ENCODE measurements at regions of chr16 and their contacts with region 1.

Region 1: GRCh38 chr16:8868416-8869211 is at the start of gene CARHSP1:
- DNase-seq: peak; percentile 83 to 90
- H3K4me3 ChIP-seq: peak within 1 kb of the TSS; percentile 88
- H3K27ac ChIP-seq: peak within 1 kb of the TSS; percentile 55
- H3K4me1 ChIP-seq: peaks cover 41% of the 10 kb centered on the region
- H3K27me3 ChIP-seq: no peaks in the 10 kb centered on the region
- CTCF ChIP-seq: no peak
- total RNA-seq, gene CARHSP1: 179 and 186 TPM in 2 replicates

Region 2: DNA sequence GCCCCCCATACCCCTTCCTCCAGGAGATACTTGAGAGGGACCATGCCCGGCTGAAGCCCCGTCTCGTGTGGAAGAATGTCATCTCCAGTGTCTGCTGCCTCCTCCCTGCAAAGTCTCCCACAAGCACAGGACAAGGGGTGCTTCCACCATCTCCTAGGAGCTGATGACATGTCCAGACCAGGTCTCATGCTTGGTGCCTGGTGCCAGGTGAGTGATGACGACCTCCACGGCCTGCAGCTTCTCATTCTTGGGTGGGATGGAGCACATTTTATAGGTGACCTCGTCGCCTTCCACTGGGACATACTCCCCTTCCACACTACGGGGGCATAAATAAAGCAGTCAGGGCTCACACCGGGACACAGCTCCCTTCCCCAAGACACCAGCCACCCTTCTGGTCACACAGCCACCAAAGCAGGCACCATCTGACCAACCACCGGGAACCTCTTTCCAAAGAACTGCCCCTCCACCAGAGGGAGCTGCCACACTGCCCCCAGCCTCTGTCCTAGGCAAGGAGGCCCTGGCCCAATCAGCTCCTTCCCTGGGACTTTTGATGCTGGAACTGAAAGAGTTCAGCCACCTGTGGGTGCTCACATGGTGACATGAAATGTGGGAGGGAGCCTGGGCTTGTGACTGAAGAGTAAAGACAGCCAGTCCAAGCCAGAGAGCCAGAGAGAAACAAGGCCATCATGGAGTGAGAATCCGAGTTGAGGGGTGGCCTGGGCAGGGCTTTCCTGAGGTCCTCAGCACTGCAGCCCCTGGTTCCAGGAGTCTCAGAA is 13.4 kb before region 1 on chr16:
- CTCF ChIA-PET with region 1: interaction called, 3 read pairs
- POLR2A ChIA-PET with region 1: interaction called, 15 read pairs
- intact Hi-C with region 1: no loop called
- DNase-seq: no peak
- H3K4me3 ChIP-seq: no peak overlapping the region
- H3K27ac ChIP-seq: no peak overlapping the region
- H3K4me1 ChIP-seq: peaks cover 4% of the 10 kb centered on the region
- H3K27me3 ChIP-seq: no peaks in the 10 kb centered on the region
- CTCF ChIP-seq: no peak

Region 3: GRCh38 chr16:8916541-8917225 is 48.1 kb after region 1 on chr16:
- CTCF ChIA-PET with region 1: no interaction called
- POLR2A ChIA-PET with region 1: interaction called, 11 read pairs
- intact Hi-C with region 1: no loop called
- DNase-seq: no peak
- H3K4me3 ChIP-seq: no peak overlapping the region
- H3K27ac ChIP-seq: no peak overlapping the region
- H3K4me1 ChIP-seq: peaks cover 25% of the 10 kb centered on the region
- H3K27me3 ChIP-seq: no peaks in the 10 kb centered on the region
- CTCF ChIP-seq: no peak

Measured in PC-9 (cell line).